ENCODE measurements at regions of chr17 and their contacts with region 1.

Region 1: DNA sequence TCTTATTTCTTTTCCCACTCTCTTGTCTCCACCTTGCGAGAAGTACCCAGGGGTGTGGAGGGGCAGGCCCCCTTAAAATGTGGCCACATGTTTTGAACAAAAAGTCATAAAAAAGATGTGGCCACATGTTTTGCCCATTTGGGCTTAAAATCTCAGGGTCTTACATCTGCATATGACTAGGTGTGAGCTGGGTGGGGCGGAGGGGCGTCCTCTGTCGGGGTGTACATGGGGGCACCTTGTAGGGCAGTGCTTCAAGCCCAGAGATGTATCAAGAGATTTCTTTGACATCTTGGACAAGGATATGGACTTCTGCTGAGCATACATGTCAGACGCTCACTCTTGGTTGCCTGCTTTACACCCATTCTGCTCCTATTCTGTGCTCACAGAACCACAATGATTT is 13.0 kb upstream of the SLC47A1 start:
- DNase-seq: no peak
- H3K4me3 ChIP-seq: no peak overlapping the region
- H3K4me3 Mint-ChIP-seq: peak overlapping the region; percentile 66
- H3K27ac Mint-ChIP-seq: peak overlapping the region; percentile 58
- H3K4me1 ChIP-seq: peaks cover 27% of the 10 kb centered on the region
- H3K4me1 Mint-ChIP-seq: peaks cover 22% of the 10 kb centered on the region
- H3K27me3 ChIP-seq: no peaks in the 10 kb centered on the region
- H3K27me3 Mint-ChIP-seq: no peaks in the 10 kb centered on the region
- CTCF ChIP-seq: no peak

Region 2: DNA sequence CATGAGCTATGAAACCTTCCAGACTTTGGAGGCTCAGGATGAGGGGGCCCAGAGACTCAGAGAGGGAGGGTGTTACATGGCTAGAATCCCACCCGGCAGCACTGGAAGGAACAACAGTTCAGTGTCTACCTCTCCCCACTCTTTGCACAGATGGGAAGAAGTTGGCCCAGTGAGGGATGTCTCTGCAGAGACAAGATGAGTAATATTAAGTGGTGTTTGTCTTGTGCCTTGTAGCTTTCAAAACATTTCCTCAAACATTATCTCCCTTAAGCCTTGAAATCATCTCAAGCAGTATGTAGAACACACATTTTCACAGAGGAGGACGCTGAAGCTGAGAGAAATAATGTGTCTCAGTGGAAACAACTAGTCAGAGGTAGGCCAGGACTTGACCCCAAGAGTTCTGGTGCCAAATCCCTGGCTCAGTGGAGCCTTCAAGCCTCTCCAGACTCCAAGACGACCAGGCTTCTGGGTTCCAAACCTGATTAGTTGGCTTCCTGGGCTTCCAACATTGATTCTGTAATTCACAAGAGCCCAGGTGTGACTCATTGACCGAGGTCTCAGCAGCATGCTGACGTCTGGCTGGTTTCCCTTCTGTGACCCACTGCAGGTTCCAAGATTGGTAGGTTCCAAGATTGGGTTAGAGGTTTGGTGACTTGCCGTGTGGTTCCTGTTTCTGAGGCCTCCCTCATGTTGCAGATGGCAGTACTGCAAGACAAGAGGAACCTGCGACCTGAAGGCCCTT is 102.2 kb before region 1 on chr17:
- CTCF ChIA-PET with region 1: no interaction called
- POLR2A ChIA-PET with region 1: no interaction called
- intact Hi-C with region 1: no loop called
- DNase-seq: no peak
- H3K4me3 ChIP-seq: no peak overlapping the region
- H3K4me3 Mint-ChIP-seq: no peak overlapping the region
- H3K27ac Mint-ChIP-seq: no peak overlapping the region
- H3K4me1 ChIP-seq: no peaks in the 10 kb centered on the region
- H3K4me1 Mint-ChIP-seq: no peaks in the 10 kb centered on the region
- H3K27me3 ChIP-seq: no peaks in the 10 kb centered on the region; the same call in 1 of the 2 replicates
- H3K27me3 Mint-ChIP-seq: peaks cover 2% of the 10 kb centered on the region
- CTCF ChIP-seq: no peak

Region 3: DNA sequence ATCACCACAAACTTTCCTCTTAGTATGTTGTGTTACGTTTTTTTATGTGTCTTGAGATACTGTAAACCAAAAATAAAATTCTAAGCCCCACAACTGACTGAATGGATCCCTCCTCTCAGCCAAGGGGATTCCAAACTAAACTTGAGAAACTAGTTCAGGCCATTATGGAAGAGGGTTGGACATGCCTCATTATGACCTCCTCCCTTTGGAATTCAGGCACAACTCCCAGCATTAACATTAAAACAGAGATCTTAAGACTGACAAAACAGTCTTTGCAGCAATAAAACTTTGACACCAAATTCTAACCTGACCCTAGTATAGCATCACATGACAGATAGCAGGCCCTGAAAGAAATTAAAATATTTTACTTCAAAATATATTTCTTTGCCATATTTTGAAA is 38.1 kb before region 1 on chr17:
- CTCF ChIA-PET with region 1: no interaction called
- POLR2A ChIA-PET with region 1: no interaction called
- intact Hi-C with region 1: no loop called
- DNase-seq: no peak
- H3K4me3 ChIP-seq: no peak overlapping the region
- H3K4me3 Mint-ChIP-seq: no peak overlapping the region
- H3K27ac Mint-ChIP-seq: no peak overlapping the region
- H3K4me1 ChIP-seq: no peaks in the 10 kb centered on the region
- H3K4me1 Mint-ChIP-seq: peaks cover 6% of the 10 kb centered on the region
- H3K27me3 ChIP-seq: no peaks in the 10 kb centered on the region
- H3K27me3 Mint-ChIP-seq: no peaks in the 10 kb centered on the region
- CTCF ChIP-seq: no peak

Region 4: DNA sequence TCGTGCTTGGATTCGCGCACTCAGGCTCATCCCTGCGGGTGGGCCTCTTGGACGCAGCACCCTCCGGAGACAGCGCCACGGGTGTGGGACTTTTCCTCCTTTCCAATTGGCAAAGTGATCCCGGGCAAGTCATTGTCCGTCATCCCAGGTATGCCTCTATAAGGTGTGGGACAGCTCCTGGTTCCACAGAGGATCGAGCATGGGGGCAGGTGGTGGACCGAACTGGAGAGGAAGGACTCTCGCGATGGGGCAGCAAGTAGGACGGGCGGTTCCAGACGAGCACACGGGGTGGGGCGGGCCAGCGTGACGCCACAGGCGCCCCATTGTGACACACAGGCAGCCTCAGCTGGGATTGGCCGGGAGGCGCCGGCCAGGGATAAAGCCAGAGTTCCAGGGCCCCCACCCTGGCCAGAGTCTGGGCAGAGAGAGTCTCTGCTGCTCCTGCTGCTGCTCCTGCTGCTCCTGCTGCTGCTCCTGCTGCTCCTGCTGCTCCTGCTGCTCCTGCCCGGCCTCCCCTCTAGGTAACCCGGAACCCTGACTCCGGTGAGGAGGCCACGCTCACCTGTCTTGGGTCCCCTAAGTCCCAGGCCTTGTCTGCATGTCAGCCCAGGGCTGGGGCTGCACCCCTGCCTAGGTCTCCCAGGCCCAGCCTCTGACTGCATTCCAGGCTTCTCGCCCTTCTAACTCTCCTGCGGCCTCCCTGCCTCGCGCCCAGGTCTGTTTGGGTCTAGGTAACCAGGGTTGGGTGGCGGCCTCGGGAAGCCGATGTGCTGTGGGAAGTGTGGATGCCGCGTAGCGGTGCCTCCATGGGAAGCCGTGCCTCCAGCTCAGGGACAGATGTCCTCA is 25.5 kb before region 1 on chr17:
- CTCF ChIA-PET with region 1: no interaction called
- POLR2A ChIA-PET with region 1: no interaction called
- intact Hi-C with region 1: no loop called
- DNase-seq: no peak
- H3K4me3 ChIP-seq: no peak overlapping the region
- H3K4me3 Mint-ChIP-seq: no peak overlapping the region
- H3K27ac Mint-ChIP-seq: no peak overlapping the region
- H3K4me1 ChIP-seq: no peaks in the 10 kb centered on the region
- H3K4me1 Mint-ChIP-seq: no peaks in the 10 kb centered on the region
- H3K27me3 ChIP-seq: no peaks in the 10 kb centered on the region
- H3K27me3 Mint-ChIP-seq: no peaks in the 10 kb centered on the region
- CTCF ChIP-seq: no peak

Region 5: DNA sequence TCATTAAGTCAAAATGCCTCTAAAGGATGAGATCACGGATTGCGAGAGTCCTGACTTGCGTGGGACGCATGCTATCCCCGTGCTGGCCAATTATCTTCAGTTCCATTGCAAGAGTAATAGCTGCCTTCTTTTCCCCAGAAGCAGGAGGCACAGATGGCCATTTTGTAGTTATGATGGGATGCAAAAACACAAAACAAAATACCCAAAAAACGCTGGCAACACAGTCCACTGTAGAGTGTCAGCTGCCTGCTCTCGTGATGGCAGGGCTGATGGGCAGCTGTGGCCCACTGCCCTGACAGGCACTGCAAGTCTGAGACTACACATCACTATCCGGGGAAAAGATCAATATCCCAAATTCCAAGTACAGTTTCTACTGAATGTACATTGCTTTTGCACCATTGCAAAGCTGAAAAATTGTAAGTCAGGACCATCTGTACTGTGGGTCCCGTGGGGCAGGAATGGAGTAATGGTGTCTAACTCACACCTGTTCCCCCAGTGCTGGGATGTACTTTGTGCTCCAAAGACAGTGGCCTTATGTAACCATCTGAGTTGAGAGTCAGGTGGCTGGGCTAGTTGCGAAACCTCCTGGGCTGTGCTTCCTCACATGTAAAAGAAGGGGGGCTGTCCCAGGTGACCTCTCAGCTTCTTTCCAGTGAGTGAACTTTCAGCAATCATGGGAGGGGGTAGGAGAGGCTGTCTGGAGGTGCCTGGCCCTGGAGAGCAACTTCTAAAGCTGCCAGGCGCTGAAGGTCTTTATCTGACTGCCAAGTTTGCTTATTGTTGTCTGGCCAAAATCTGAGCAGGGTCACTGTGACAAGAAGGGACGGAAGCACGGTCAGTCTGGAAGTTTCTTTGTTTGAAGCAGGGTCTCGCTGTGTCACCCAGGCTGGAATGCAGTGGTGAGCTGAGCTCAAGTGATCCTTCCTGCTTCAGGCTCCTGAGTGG is 17.7 kb after region 1 on chr17:
- CTCF ChIA-PET with region 1: no interaction called
- POLR2A ChIA-PET with region 1: no interaction called
- intact Hi-C with region 1: loop called (anchors 2 kb)
- DNase-seq: peak; percentile 57 to 71
- H3K4me3 ChIP-seq: no peak overlapping the region
- H3K4me3 Mint-ChIP-seq: no peak overlapping the region
- H3K27ac Mint-ChIP-seq: no peak overlapping the region
- H3K4me1 ChIP-seq: peaks cover 6% of the 10 kb centered on the region; the same call in 1 of the 2 replicates
- H3K4me1 Mint-ChIP-seq: peaks cover 16% of the 10 kb centered on the region
- H3K27me3 ChIP-seq: no peaks in the 10 kb centered on the region; the same call in 1 of the 2 replicates
- H3K27me3 Mint-ChIP-seq: peaks cover 7% of the 10 kb centered on the region
- CTCF ChIP-seq: no peak

Region 6: DNA sequence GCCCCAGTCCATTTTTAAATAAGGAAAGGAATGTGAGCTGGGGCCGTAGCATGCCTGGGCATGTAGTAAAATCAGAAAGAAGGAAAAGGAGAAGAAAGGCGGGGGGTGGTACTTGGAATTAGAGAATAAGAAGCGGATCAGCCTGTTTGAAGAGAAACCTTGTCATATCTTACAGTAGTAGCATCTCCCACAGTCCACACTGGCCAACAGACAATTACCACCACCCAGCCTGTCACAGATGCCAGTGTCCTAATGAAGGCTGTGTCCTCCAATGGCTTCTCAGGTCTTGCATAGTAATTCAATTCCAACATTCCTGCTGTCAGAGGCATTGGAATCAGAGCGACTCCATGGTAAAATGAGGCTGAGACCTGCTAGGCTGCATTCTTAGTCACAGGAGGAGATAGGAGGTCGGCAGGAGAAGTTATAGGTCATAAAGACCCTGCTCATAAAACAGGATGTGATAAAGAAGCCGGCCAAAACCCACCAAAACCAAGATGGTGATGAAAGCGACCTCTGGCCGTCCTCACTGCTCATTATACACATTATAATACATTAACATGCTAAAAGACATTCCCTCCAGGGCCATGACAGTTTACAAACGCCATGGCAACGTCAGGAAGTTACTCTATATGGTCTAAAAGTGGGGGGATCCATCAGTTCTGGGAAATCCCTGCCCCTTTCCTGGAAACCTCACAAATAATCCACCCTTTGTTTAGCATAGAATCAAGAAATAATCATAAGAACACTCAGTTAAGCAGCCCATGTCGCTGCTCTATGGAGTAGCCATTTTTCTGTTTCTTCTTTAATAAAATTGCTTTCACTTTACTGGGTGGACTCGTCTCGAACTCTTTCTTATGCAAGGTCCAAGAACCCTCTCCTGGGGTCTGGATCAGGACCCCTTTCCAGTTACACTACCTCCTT is 466.6 kb after region 1 on chr17:
- CTCF ChIA-PET with region 1: no interaction called
- POLR2A ChIA-PET with region 1: no interaction called
- intact Hi-C with region 1: no loop called
- DNase-seq: peak; percentile 11 to 58
- H3K4me3 ChIP-seq: no peak overlapping the region
- H3K4me3 Mint-ChIP-seq: no peak overlapping the region
- H3K27ac Mint-ChIP-seq: peak overlapping the region; percentile 63
- H3K4me1 ChIP-seq: peaks cover 11% of the 10 kb centered on the region; the same call in 1 of the 2 replicates
- H3K4me1 Mint-ChIP-seq: peaks cover 7% of the 10 kb centered on the region
- H3K27me3 ChIP-seq: no peaks in the 10 kb centered on the region
- H3K27me3 Mint-ChIP-seq: no peaks in the 10 kb centered on the region
- CTCF ChIP-seq: no peak

Measured in Caco-2 (cell line).